Gastrocnemius medialis (tissue), 4 donors: ENCODE measurements at regions of chr3 and their contacts with region 1.

Region 1: DNA sequence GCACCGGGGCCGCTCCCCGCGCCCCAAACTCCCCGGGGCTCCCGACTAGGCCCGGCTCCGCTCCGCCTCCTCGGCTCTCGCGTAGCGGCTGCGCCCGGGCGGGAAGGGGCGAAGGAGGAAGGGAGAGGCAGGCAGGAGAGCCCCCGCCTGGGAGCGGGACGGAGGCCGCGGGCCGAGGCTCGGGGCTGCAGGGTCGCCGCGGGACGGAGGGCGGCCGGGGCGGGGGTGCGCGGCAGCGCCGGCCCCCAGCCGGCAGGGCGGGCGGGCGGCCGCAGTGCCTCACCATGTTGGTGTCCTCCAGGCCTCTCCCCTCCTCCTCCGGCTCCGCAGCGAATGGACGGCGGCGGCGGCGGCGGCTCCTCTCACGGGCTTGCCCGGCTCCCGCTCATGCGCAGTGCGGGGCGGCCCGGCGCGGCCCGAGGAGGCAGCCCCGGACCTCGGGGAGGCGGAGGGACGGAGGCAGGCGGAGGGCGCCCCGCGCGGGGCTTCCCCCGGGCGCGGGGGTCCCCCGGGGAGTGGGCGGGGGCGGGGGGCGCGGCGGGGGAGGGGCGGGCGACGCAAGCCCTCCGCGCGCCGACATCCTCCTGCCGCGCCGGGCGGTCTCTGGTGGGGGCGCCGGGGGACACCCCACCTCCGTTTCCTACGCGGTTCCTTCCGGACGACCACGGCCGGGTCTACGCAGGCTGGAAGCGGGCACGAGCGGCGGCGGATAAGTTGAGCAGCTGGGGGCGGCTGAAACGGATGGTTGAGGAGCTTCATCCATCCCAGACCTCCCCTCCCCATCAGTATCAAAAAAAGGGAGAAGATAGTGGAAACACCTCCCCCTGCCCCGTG is at the start of gene DCUN1D1:
- DNase-seq: peak; percentile 79 to 88
- ATAC-seq: peak; percentile 86 to 91
- H3K4me3 ChIP-seq: peak within 1 kb of the TSS; percentile 71 to 97 (median 82)
- H3K27ac ChIP-seq: peak within 1 kb of the TSS; percentile 87 to 96 (median 95)
- H3K4me1 ChIP-seq: peaks cover 33 to 35% of the 10 kb centered on the region in 2 donors
- H3K27me3 ChIP-seq: no peaks in the 10 kb centered on the region
- CTCF ChIP-seq: no peak
- POLR2A ChIP-seq: peak; percentile 75 to 78
- total RNA-seq, gene DCUN1D1: 42.2 to 116 (median 54.4) TPM

Region 2: DNA sequence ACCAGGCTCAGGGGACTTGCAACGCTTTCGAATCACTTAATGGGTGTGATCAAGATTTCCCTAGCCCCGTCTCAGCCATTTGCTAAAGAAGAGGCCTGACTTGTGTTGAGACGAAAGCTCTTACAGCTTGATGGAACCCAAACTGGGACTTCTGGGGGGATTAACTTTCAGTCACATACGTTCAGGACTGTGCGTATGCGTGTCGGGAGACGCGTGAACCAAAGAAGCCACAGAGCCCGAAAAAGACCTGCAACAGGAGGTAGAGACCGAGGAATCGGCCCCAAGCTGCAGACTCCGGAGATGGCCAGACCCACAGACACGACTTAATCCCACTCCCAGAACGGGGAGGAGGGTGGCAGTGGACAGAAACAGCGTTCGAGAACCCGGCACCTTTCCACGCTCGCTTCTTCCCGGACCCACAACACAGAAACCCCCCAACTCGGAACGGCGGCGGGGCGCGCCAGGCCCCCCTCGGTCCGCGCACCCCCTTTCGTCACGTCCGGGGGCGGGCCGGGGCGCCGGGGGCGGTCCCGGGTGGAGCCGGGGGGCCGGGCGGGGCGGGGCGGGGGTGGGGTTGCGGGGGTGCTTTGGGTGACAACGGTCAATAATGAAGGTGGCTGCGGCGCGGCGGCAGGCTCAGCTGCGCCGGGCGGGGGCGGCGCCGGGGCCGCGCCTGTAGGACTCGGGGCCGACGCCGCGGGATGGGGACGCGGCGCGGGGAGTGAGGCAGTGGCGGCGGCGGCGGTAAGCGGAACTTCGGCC is 187.3 kb before region 1 on chr3 and contains the start of gene ATP11B:
- in situ Hi-C with region 1: no loop called
- intact Hi-C with region 1: loop called (anchors 5 kb)
- DNase-seq: peak; percentile 47 to 59
- ATAC-seq: peak; percentile 77 to 81
- H3K4me3 ChIP-seq: peak within 1 kb of the TSS; percentile 78 to 94 (median 86)
- H3K27ac ChIP-seq: peak within 1 kb of the TSS; percentile 88 to 95 (median 94)
- H3K4me1 ChIP-seq: peaks cover 20 to 26% of the 10 kb centered on the region in 2 donors
- H3K27me3 ChIP-seq: no peaks in the 10 kb centered on the region
- CTCF ChIP-seq: no peak
- POLR2A ChIP-seq: peak; percentile 74 to 88
- total RNA-seq, gene ATP11B: 16.3 to 44.6 (median 23.4) TPM

Region 3: GRCh38 chr3:182925330-182925943 is 55.0 kb before region 1 on chr3:
- in situ Hi-C with region 1: no loop called
- intact Hi-C with region 1: loop called (anchors 5 kb)
- DNase-seq: peak; percentile 60 to 82
- ATAC-seq: peak; percentile 97
- H3K4me3 ChIP-seq: peak overlapping the region in 1 of 4 donors; percentile 19
- H3K27ac ChIP-seq: peak overlapping the region; percentile 24 to 73 (median 51)
- H3K4me1 ChIP-seq: peaks cover 3 to 19% of the 10 kb centered on the region in 2 donors
- H3K27me3 ChIP-seq: no peaks in the 10 kb centered on the region
- CTCF ChIP-seq: no peak
- POLR2A ChIP-seq: no peak

Region 4: DNA sequence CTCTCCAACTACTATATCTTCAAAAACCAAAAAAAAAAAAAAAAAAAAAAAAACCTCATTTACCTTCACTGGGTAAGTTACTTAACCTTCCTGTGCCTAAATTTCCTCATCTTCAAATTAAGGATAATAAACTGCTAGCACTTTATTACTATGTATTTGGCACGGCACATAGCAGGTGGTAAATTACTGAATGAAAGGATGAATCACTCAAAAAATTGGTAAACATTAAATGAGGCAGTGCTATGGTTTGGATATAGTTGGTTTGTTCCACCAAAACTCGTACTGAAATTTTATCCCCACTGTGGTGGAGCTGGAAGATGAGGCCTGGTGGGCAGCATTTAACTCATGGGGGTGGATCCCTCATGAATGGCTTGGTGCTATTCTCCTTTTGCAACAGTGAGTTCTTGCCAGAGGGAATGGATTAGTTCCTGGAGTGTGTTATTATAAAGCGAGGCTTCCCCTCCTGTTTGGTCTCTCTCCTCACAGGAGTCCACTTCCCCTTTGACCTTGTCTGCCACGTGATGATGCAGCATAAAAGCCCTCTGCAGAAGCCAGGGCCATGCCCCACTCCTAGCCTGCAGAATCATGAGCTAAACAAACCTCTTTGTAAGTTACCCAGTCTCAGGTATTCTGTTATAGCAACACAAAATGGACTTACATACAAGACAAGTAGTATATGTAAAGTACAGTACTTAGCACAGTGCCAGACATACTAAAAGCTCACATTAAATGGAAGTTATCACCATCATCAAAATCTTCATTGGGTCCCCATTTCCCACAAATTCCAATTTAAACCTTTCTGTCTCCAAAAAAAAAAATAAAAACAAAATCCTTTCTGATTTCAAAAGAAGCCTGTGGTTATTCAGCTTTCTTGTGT is 20.7 kb before region 1 on chr3:
- in situ Hi-C with region 1: no loop called
- intact Hi-C with region 1: loop called (anchors 2 kb)
- DNase-seq: no peak
- ATAC-seq: peak in 1 of 2 donors; percentile 13
- H3K4me3 ChIP-seq: no peak overlapping the region
- H3K27ac ChIP-seq: peak overlapping the region; percentile 71 to 86 (median 81)
- H3K4me1 ChIP-seq: peaks cover 59 to 79% of the 10 kb centered on the region in 2 donors
- H3K27me3 ChIP-seq: no peaks in the 10 kb centered on the region
- CTCF ChIP-seq: no peak
- POLR2A ChIP-seq: no peak

Region 5: GRCh38 chr3:183158551-183159006 is 178.2 kb after region 1 on chr3:
- in situ Hi-C with region 1: no loop called
- intact Hi-C with region 1: no loop called
- DNase-seq: no peak
- ATAC-seq: no peak
- H3K4me3 ChIP-seq: no peak overlapping the region
- H3K27ac ChIP-seq: no peak overlapping the region
- H3K4me1 ChIP-seq: no peaks in the 10 kb centered on the region
- H3K27me3 ChIP-seq: peaks cover 0 to 19% (median 17%) of the 10 kb centered on the region in 3 donors
- CTCF ChIP-seq: no peak
- POLR2A ChIP-seq: no peak

Region 6: GRCh38 chr3:183330881-183331280 is 350.5 kb after region 1 on chr3:
- in situ Hi-C with region 1: no loop called
- intact Hi-C with region 1: no loop called
- DNase-seq: no peak
- ATAC-seq: no peak
- H3K4me3 ChIP-seq: no peak overlapping the region
- H3K27ac ChIP-seq: no peak overlapping the region
- H3K4me1 ChIP-seq: no peaks in the 10 kb centered on the region
- H3K27me3 ChIP-seq: no peaks in the 10 kb centered on the region
- CTCF ChIP-seq: no peak
- POLR2A ChIP-seq: no peak